Activated CD4-positive, alpha-beta T cell treated with anti-CD3 and anti-CD28 coated beads for 36 hours (primary cell): ENCODE measurements at regions of chr16 and their contacts with region 1.

Region 1: DNA sequence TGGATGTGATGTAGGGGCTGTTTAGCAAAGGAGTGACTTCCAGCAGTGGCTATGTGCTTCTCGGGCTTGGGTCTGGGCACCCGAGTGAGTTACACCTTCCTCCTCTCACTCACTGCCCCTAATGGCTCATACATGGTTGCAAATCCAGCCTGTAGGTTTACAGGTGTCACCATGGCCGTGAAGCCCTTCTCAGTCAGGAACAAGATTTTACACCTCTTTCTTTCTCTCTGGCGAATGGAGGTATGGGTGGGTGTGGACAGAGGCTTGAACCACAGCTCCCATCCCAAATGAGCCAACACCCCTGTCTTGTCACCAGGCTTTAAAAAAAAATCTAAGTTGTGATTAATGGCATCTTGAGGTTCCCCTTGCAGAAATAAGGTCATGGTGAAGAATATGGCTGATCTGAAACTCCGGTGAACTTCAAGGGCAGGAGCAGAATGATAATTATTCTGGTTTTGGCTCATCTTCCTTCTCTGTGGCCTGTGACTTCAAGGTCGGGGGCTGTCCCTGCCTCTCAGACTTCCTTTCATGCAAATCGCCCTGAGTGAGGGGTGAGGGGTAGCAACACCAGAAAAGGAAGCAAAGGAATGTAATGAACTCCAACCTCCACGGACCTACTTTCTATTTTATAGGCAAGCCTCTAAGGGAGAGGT is 331.2 kb downstream of the MAF start:
- DNase-seq: peak; percentile 86
- ATAC-seq: peak; percentile 70
- H3K4me3 Mint-ChIP-seq: peak overlapping the region; percentile 19
- H3K27ac Mint-ChIP-seq: peak overlapping the region; percentile 86
- H3K4me1 Mint-ChIP-seq: peaks cover 89% of the 10 kb centered on the region
- H3K27me3 Mint-ChIP-seq: peaks cover 26% of the 10 kb centered on the region

Region 2: GRCh38 chr16:77308163-77308561 is 1961.2 kb before region 1 on chr16:
- CTCF ChIA-PET with region 1: no interaction called
- POLR2A ChIA-PET with region 1: no interaction called
- intact Hi-C with region 1: loop called in 1 of 2 experiments (anchors 5 kb)
- DNase-seq: no peak
- ATAC-seq: peak; percentile 95
- H3K4me3 Mint-ChIP-seq: no peak overlapping the region
- H3K27ac Mint-ChIP-seq: peak overlapping the region; percentile 73
- H3K4me1 Mint-ChIP-seq: peaks cover 28% of the 10 kb centered on the region
- H3K27me3 Mint-ChIP-seq: peaks cover 14% of the 10 kb centered on the region

Region 3: DNA sequence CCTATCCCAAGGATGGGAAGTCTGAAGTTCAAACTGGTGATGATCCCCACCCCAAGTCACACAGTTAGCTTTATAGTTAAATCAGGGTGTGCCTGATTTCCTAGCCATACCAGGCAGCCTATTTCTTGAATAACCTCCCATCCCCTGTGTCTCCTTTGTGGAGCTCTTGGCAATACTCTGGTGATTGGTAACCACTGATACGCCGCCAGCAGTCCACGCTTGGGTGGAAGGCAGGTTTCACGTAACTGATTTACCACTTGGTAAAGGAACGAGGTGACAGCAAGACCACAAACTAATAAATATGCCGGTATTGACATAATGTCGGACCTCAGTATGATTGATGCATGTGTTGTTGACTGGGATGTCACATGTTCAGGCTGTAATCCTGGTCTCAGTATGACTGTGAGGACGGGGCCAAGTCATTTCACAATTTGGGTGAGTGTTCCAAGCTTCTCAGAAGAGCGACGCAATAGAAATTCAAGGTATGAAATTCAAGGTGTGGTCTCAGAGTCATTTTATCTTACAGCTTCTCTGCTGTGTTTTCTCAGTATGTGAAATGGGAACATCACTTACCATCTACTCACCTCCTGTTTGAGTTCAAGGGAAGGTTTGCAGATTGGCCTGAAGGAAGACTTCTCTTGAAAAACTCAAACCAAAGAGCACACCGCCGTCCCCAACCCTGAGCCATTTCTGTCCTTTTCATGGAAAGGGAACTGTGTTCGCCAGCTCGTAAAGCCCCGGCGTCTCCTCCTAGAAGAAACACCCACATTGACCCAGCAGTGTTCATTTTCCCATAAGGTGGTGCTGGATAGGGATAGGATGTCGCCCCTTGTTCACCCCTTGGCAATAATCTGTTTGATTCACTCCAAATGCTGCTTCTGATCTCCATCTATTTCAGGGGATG is 491.0 kb before region 1 on chr16:
- CTCF ChIA-PET with region 1: interaction called, 3 read pairs
- POLR2A ChIA-PET with region 1: interaction called, 5 read pairs
- intact Hi-C with region 1: loop called (anchors 1 to 5 kb)
- DNase-seq: peak; percentile 77
- ATAC-seq: peak; percentile 66
- H3K4me3 Mint-ChIP-seq: peak overlapping the region; percentile 41
- H3K27ac Mint-ChIP-seq: peak overlapping the region; percentile 94
- H3K4me1 Mint-ChIP-seq: peaks cover 70% of the 10 kb centered on the region
- H3K27me3 Mint-ChIP-seq: no peaks in the 10 kb centered on the region

Region 4: GRCh38 chr16:78962457-78962929 is 306.8 kb before region 1 on chr16:
- CTCF ChIA-PET with region 1: interaction called, 3 read pairs
- POLR2A ChIA-PET with region 1: no interaction called
- intact Hi-C with region 1: loop called in 1 of 2 experiments (anchors 5 kb)
- DNase-seq: no peak
- ATAC-seq: peak; percentile 86
- H3K4me3 Mint-ChIP-seq: no peak overlapping the region
- H3K27ac Mint-ChIP-seq: peak overlapping the region; percentile 86
- H3K4me1 Mint-ChIP-seq: peaks cover 23% of the 10 kb centered on the region
- H3K27me3 Mint-ChIP-seq: no peaks in the 10 kb centered on the region

Region 5: DNA sequence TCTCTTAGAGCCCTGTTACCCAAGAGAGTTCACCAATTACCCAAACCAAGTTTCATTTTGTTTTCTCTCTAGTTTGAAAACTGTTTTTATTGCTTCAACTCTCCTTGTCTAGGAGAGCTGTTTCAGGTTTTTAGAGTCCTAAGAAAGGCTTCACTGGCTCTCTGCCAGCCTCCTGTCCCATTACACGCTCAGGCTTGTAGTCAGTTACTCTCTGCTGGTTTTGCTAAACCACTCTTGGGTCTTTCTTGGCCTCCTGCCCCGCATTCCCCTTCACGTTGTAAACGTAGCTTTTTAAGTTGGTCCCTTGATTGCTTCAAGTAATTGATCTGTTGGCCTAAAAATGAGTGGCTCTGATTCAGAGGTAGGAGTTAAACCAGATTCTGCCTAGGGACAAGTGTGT is 197.9 kb before region 1 on chr16:
- CTCF ChIA-PET with region 1: interaction called, 6 read pairs
- POLR2A ChIA-PET with region 1: interaction called, 7 read pairs
- intact Hi-C with region 1: loop called (anchors 1 kb)
- DNase-seq: no peak
- ATAC-seq: no peak
- H3K4me3 Mint-ChIP-seq: no peak overlapping the region
- H3K27ac Mint-ChIP-seq: peak overlapping the region; percentile 34
- H3K4me1 Mint-ChIP-seq: peaks cover 64% of the 10 kb centered on the region
- H3K27me3 Mint-ChIP-seq: peaks cover 2% of the 10 kb centered on the region

Region 6: DNA sequence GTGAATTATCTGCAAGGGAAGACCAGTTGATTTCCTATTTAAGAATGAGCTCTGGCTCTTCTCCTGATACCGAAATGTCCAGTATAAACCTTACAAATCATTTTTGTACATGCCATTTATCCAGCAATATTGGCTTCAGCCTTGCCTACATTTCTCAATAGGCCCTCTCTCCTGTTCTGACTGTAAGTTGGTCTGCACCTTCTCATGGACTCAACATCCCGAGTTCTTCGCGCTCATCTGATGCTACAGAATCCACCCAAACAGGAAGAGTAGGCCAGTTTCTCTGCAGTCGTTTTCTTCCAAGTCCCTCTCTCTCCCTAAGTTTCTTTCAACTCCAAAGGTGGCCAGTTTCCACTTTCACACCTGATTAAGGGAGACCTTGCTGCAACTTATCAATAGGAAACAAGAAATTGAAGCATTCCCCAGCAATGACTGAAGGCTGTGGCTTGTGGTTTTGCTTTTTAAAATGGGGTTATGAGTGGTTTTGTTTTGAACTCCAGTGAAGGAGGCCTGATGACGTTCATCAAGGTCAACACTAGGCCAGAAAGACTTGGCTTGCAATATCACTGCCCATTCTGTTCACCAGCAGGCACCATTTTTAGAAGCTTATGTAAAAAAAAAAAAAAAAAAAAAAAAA is 51.8 kb before region 1 on chr16:
- CTCF ChIA-PET with region 1: no interaction called
- POLR2A ChIA-PET with region 1: no interaction called
- intact Hi-C with region 1: loop called (anchors 2 to 5 kb)
- DNase-seq: peak; percentile 46
- ATAC-seq: peak; percentile 82
- H3K4me3 Mint-ChIP-seq: no peak overlapping the region
- H3K27ac Mint-ChIP-seq: peak overlapping the region; percentile 34
- H3K4me1 Mint-ChIP-seq: peaks cover 13% of the 10 kb centered on the region
- H3K27me3 Mint-ChIP-seq: peaks cover 5% of the 10 kb centered on the region

Region 7: GRCh38 chr16:79463841-79464240 is 194.5 kb after region 1 on chr16:
- CTCF ChIA-PET with region 1: no interaction called
- POLR2A ChIA-PET with region 1: no interaction called
- intact Hi-C with region 1: no loop called
- DNase-seq: no peak
- ATAC-seq: no peak
- H3K4me3 Mint-ChIP-seq: no peak overlapping the region
- H3K27ac Mint-ChIP-seq: no peak overlapping the region
- H3K4me1 Mint-ChIP-seq: no peaks in the 10 kb centered on the region
- H3K27me3 Mint-ChIP-seq: peaks cover 1% of the 10 kb centered on the region

Region 8: DNA sequence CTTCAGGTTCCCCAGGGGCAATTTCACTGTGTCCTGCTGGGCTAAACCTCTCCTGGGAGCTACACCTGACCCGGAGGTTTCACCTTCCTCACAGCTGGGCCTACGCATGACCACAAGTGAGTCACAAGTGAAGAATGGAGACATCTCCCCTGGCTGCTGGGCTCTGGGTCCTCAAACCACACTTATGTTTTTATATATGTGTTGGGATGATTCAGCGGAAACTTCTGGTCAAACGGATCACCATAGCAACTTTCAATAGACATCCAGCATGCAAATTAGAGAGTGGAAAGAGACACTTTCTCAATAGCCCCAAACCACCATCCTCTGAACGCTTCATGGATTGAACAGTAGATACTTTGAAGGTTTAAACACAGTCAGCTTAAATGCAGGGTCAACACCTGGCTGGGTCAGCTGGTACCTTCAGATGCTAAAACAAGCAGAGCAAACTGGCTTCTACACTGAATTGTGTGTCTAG is 359.2 kb after region 1 on chr16:
- CTCF ChIA-PET with region 1: no interaction called
- POLR2A ChIA-PET with region 1: no interaction called
- intact Hi-C with region 1: loop called in 1 of 2 experiments (anchors 1 kb)
- DNase-seq: peak; percentile 86
- ATAC-seq: peak; percentile 94
- H3K4me3 Mint-ChIP-seq: no peak overlapping the region
- H3K27ac Mint-ChIP-seq: peak overlapping the region; percentile 71
- H3K4me1 Mint-ChIP-seq: peaks cover 14% of the 10 kb centered on the region
- H3K27me3 Mint-ChIP-seq: peaks cover 24% of the 10 kb centered on the region

Region 9: GRCh38 chr16:79640513-79641355 is 371.4 kb after region 1 on chr16:
- CTCF ChIA-PET with region 1: no interaction called
- POLR2A ChIA-PET with region 1: no interaction called
- intact Hi-C with region 1: no loop called
- DNase-seq: no peak
- ATAC-seq: no peak
- H3K4me3 Mint-ChIP-seq: no peak overlapping the region
- H3K27ac Mint-ChIP-seq: no peak overlapping the region
- H3K4me1 Mint-ChIP-seq: peaks cover 24% of the 10 kb centered on the region
- H3K27me3 Mint-ChIP-seq: peaks cover 2% of the 10 kb centered on the region